Ascending aorta (tissue), 2 donors: ENCODE measurements at regions of chr7 and their contacts with region 1.

Region 1: DNA sequence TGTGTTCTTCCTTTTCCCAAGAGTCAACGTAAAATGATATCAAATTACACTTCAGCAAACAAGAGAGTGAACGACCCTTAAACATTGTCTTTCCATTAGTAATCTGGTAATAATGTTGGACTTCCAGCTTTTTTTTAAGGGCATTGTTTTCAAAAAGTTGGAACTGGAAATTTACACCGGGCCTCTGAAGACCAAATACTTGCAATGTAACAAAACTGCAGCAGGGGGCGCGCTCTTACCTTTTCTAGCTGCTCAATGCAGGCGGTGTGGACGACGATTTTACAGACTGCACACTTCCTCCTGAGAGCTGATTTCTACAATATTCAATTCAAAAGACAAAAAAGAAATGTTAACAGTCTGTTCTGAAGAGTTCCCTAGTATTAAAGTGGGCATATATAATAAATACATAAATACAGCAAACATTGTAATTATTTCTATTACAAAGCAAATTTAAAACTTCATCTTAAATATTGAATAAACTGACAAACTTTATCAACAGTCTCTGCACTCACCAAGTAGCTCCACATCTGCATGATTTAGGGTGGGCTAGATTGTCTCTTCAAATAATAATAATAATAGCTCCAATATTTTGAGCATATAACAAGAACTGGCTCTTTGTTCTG is 190.4 kb downstream of the DGKI start:
- DNase-seq: peak in 1 of 2 donors; percentile 90
- H3K4me3 ChIP-seq: no peak overlapping the region
- H3K27ac ChIP-seq: peak overlapping the region; percentile 47 to 60
- H3K4me1 ChIP-seq: peaks cover 5 to 9% of the 10 kb centered on the region in 2 donors
- H3K27me3 ChIP-seq: no peaks in the 10 kb centered on the region
- CTCF ChIP-seq: peak; percentile 57 to 89 (median 88)

Region 2: GRCh38 chr7:137772748-137773147 is 116.4 kb after region 1 on chr7:
- intact Hi-C with region 1: loop called (anchors 5 kb)
- DNase-seq: no peak
- H3K4me3 ChIP-seq: no peak overlapping the region
- H3K27ac ChIP-seq: no peak overlapping the region
- H3K4me1 ChIP-seq: peaks cover 0 to 21% of the 10 kb centered on the region in 2 donors
- H3K27me3 ChIP-seq: no peaks in the 10 kb centered on the region
- CTCF ChIP-seq: no peak

Region 3: DNA sequence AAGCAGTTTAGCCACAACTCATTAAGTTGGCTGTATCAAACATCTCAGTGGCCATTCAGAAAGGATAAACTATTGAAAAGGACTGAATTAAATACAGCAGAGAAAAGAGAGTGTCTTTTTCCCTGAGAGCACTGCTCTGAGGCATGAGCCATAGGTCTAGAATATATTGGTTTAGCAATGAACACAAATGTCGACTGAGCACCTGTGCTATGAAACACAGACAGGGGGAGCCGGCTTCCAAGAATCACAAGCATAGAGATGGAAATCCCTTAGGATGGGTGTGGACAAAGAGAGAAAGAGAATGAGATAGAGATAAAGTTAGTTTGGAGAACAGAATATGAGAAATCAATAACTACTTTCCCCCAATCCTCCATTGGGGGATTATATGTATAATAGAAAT is 135.6 kb after region 1 on chr7:
- intact Hi-C with region 1: loop called (anchors 5 kb)
- DNase-seq: no peak
- H3K4me3 ChIP-seq: no peak overlapping the region
- H3K27ac ChIP-seq: no peak overlapping the region
- H3K4me1 ChIP-seq: peaks cover 0 to 6% of the 10 kb centered on the region in 2 donors
- H3K27me3 ChIP-seq: no peaks in the 10 kb centered on the region
- CTCF ChIP-seq: no peak

Region 4: DNA sequence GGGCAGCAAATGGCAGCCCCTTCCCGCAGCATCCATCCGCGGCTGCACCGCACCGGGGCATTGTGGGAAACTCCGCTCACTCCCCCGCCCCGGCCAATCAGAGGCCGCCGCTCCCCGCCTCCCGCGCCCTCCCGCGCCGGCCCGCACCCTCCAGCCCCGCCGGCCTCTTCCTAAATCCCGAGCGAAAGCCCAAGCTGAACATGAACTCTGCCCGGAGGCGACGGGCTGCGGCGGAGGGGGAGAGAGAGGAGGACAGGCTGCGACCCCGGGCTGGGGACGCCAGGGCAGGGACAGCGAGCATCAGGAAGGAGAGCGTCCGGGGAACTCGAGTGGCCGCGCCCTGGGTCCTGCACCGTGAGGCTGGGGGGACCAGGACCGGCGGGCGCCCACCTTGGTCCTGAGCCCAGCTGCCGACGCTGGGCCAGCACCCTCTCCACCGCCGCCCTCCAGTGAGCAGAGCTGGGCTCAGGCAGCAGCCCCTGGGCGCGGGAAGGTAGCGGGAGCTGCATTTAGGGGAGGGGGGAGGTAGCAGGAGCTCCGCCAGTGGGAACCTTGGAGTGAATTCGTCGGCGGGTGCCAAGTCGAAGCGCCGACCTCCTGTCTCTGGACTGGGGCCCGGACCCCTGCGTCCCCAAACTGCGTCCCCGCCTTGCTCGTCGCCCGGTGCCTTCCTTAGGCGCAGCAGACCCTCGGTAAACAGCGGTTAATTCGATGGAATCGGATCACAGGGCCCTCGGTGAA is 190.7 kb after region 1 on chr7 and contains the start of gene DGKI:
- intact Hi-C with region 1: loop called (anchors 2 kb)
- DNase-seq: peak in 1 of 2 donors; percentile 69
- H3K4me3 ChIP-seq: peak within 1 kb of the TSS; percentile 68 to 78
- H3K27ac ChIP-seq: peak within 1 kb of the TSS; percentile 31 to 39
- H3K4me1 ChIP-seq: no peaks in the 10 kb centered on the region
- H3K27me3 ChIP-seq: no peaks in the 10 kb centered on the region
- CTCF ChIP-seq: no peak
- total RNA-seq, gene DGKI: 13.4 TPM

Region 5: DNA sequence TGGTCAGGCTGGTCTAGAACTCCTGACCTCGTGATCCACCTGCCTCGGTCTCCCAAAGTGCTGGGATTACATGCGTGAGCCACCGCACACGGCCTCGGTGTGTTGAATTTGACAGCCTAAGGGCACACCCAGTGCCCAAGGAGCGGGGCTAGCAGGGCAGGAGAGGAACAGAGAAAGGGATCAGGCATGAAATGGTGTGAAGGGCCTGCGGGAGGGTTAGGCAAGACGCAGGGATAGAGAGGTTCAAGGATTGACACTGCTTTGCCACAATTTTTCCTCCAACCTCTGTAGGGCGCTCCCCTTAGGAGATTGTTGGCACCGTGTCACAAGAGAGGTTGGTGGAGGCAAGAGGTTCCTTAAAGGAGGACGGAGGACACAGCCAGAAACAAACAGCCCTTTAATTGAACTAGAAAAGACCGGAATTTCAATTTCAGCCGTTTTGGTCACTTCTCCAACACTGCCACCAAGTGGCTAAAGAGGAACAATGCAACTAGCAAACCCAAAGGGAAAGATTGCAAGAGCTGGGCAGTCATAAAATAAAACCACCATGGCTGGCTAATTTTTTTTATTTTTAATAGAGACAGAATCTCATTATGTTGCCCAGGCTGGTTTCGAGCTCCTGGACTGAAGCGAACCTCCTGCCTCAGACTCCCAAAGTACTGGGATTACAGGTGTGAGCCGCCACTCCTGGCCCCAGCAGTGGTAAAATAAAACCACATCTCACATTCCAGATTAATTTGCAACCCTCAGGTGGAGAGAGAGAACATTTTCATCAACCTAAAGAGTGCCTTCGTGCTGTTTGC is 352.4 kb after region 1 on chr7:
- intact Hi-C with region 1: loop called (anchors 2 kb)
- DNase-seq: no peak
- H3K4me3 ChIP-seq: no peak overlapping the region
- H3K27ac ChIP-seq: no peak overlapping the region
- H3K4me1 ChIP-seq: no peaks in the 10 kb centered on the region
- H3K27me3 ChIP-seq: no peaks in the 10 kb centered on the region
- CTCF ChIP-seq: peak; percentile 80 to 92 (median 90)